CD14-positive monocyte (primary cell): ENCODE measurements at regions of chr5 and their contacts with region 1.

Region 1: DNA sequence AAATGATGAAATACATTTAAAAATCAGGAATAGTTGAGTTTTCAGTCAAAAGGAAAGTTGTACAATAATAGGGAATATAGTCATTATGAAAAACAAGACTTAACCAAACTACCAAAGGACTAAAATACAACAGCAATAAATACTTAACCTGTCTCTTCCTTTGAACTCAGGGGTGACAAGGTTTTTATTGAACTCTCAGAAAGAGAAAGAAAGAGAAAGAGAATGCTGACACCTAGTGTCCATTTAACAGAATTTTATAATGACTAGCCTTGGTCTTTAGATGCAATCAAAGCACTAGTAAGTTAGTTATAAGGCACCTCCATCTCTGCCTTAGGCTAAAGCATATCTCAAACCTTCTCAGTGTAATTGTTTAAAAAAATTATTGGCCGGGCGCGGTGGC is 47.5 kb downstream of the UIMC1 start:
- DNase-seq: peak; percentile 1 to 68 (median 23)
- H3K4me3 ChIP-seq: no peak overlapping the region
- H3K4me3 Mint-ChIP-seq: no peak overlapping the region
- H3K27ac ChIP-seq: no peak overlapping the region
- H3K27ac Mint-ChIP-seq: no peak overlapping the region
- H3K4me1 ChIP-seq: no peaks in the 10 kb centered on the region
- H3K4me1 Mint-ChIP-seq: no peaks in the 10 kb centered on the region
- H3K27me3 ChIP-seq: no peaks in the 10 kb centered on the region
- H3K27me3 Mint-ChIP-seq: no peaks in the 10 kb centered on the region
- CTCF ChIP-seq: peak; percentile 67

Region 2: DNA sequence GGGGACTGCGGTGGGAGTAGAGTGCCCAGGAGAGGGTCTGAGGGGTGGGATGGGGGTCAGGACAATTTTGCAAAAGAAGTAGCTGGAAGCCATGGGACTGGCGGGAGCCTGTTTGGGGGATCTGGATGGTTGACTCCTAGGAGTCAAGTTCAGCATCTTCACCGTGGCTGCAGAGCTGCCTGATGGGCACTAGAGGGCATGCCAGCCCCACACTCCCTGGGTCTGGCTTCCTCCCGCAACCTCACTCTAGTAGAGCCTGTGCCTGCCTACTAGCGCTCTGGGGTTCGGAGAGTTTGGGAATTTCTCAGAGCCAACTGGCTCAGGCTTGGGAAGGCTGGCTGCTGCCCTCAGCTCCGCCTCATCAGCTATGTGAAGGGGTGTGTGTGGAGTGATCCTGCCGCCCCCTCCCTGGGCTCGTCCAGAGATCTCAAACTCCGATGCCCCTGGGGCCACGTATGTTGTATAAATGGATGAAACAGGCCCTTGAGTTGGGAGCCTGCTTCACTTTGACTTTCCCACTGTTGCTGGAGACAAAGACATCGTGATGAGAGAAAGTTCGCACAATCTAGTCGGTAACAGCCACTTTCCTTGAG is 300.9 kb before region 1 on chr5:
- intact Hi-C with region 1: loop called (anchors 2 to 5 kb)
- DNase-seq: peak; percentile 47 to 62 (median 61)
- H3K4me3 ChIP-seq: peak overlapping the region in 1 of 3 experiments; percentile 76
- H3K4me3 Mint-ChIP-seq: peak overlapping the region; percentile 78 to 92
- H3K27ac ChIP-seq: no peak overlapping the region
- H3K27ac Mint-ChIP-seq: peak overlapping the region in 2 of 7 donors; percentile 75 to 76
- H3K4me1 ChIP-seq: peaks cover 18 to 19% of the 10 kb centered on the region in 2 donors
- H3K4me1 Mint-ChIP-seq: peaks cover 23% of the 10 kb centered on the region
- H3K27me3 ChIP-seq: no peaks in the 10 kb centered on the region
- H3K27me3 Mint-ChIP-seq: peaks cover 3 to 13% (median 7%) of the 10 kb centered on the region in 3 donors
- CTCF ChIP-seq: peak; percentile 92

Region 3: DNA sequence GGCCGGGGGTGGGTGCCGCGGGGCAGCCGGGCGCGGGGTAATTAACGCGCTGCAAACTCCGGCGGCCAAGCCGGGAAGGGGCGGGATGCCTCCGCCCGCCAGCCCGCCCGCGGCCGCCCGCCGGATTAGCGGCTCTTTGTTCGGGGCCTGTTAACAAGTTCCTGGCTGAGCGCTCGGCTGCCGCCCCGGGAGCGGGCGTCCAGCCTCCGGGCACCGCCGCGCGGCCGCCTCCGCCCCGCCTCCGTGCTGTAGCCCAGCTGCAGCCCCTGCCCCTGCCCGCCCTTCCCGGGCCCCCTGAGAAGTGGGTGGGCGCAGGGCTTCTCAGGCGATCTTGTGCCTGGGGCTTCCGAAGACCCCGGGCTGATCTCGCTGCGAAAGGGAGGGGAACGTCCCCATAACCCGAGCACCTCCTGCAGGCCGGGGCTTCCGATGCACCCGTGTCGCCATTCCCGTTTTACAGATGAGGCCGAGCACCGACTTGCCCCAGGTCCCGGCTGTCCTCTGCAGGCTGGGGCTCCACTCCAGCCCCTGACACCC is 141.1 kb before region 1 on chr5:
- intact Hi-C with region 1: loop called in 1 of 2 experiments (anchors 10 kb)
- DNase-seq: no peak
- H3K4me3 ChIP-seq: peak overlapping the region in 1 of 3 experiments; percentile 39
- H3K4me3 Mint-ChIP-seq: peak overlapping the region in 1 of 2 donors; percentile 78
- H3K27ac ChIP-seq: no peak overlapping the region
- H3K27ac Mint-ChIP-seq: no peak overlapping the region
- H3K4me1 ChIP-seq: peaks cover 2 to 7% of the 10 kb centered on the region in 2 donors
- H3K4me1 Mint-ChIP-seq: peaks cover 7% of the 10 kb centered on the region
- H3K27me3 ChIP-seq: peaks cover 29 to 58% of the 10 kb centered on the region in 2 donors
- H3K27me3 Mint-ChIP-seq: peaks cover 69 to 78% (median 72%) of the 10 kb centered on the region in 3 donors
- CTCF ChIP-seq: no peak

Region 4: DNA sequence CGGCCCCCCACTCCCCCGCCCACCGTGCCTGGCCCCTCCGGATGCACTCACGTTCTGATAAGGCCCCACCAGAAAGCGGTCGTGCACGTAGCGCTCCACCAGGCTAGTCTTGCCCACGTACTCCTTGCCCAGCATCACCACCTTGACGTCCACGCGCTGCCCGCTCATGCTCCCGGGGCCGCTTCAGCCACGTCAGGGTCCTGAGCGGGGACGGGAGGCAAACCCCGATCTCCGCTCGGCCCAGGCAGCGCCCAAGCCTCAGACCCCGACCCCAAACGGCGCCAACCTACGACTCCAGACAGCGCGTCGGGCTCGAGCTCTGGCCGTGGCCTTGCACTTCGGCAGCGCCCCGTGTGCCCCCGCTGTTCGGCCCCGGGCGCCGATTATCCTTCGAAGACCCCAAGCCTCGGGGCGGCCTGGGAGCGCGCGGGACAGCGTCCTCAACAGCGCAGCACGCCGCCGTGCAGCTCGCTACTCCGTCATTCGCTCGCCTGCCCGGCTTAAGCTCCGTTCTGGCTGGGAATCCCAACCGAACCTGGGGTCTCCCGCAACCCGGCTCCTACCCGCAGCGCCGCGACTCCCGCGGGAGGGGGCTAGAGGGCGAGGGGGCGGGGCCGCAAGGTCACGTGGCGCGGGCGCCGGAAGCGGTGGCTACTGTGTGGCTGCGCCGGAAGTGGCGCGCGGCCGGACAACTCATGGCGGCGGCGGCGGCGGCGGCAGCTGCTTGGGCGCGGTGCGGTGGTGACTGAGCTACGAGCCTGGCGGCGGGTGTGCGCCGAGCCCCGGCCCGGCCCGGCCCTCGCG is 344.3 kb after region 1 on chr5 and contains the starts of genes PRELID1 and RAB24:
- intact Hi-C with region 1: no loop called
- DNase-seq: peak; percentile 84 to 92 (median 92)
- H3K4me3 ChIP-seq: peak within 1 kb of the TSS; percentile 91 to 97 (median 96)
- H3K4me3 Mint-ChIP-seq: peak within 1 kb of the TSS; percentile 93 to 96
- H3K27ac ChIP-seq: peak within 1 kb of the TSS; percentile 79 to 95
- H3K27ac Mint-ChIP-seq: peak within 1 kb of the TSS; percentile 91 to 99 (median 96)
- H3K4me1 ChIP-seq: peaks cover 83 to 94% of the 10 kb centered on the region in 2 donors
- H3K4me1 Mint-ChIP-seq: peaks cover 81% of the 10 kb centered on the region
- H3K27me3 ChIP-seq: no peaks in the 10 kb centered on the region
- H3K27me3 Mint-ChIP-seq: peaks cover 0 to 2% (median 0%) of the 10 kb centered on the region in 3 donors
- CTCF ChIP-seq: peak; percentile 47
- polyA plus RNA-seq, gene PRELID1: 264 to 510 (median 490) TPM
- polyA plus RNA-seq, gene RAB24: 74.3 to 465 (median 94.4) TPM